Spleen (tissue), 13 donors: ENCODE measurements at regions of chr16 and their contacts with region 1.

Region 1: DNA sequence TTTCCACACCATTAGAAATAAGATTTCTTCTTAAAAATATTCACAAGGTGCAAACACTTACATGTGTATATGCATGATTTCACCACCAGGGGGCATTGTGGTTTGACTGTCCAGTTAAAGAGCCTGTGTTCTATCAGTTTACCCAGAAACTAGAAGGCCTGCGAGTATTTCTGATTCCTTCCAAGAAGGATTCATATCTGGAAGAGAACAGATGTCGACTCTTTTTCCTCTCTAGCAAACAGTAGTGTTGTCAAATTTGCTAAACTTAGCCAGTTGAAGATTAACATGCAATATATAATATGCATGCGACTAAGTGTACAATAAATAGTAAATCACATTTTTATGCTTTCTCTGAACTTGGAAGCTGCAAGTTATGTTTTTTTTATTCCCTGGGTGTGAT is 404.1 kb downstream of the WWOX start:
- DNase-seq: no peak
- H3K4me3 ChIP-seq: no peak overlapping the region
- H3K27ac ChIP-seq: no peak overlapping the region
- H3K4me1 ChIP-seq: peaks cover 0 to 21% (median 2%) of the 10 kb centered on the region in 6 donors
- H3K27me3 ChIP-seq: no peaks in the 10 kb centered on the region
- CTCF ChIP-seq: peak; percentile 54 to 83 (median 73)
- POLR2A ChIP-seq: no peak

Region 2: GRCh38 chr16:78770353-78771091 is 266.9 kb after region 1 on chr16:
- intact Hi-C with region 1: loop called (anchors 5 kb)
- DNase-seq: peak; percentile 95
- H3K4me3 ChIP-seq: peak overlapping the region in 1 of 8 donors; percentile 34
- H3K27ac ChIP-seq: peak overlapping the region in 5 of 8 donors; percentile 28 to 55 (median 49)
- H3K4me1 ChIP-seq: peaks cover 5 to 24% (median 11%) of the 10 kb centered on the region in 6 donors
- H3K27me3 ChIP-seq: no peaks in the 10 kb centered on the region
- CTCF ChIP-seq: peak; percentile 82 to 96 (median 91)
- POLR2A ChIP-seq: no peak

Region 3: DNA sequence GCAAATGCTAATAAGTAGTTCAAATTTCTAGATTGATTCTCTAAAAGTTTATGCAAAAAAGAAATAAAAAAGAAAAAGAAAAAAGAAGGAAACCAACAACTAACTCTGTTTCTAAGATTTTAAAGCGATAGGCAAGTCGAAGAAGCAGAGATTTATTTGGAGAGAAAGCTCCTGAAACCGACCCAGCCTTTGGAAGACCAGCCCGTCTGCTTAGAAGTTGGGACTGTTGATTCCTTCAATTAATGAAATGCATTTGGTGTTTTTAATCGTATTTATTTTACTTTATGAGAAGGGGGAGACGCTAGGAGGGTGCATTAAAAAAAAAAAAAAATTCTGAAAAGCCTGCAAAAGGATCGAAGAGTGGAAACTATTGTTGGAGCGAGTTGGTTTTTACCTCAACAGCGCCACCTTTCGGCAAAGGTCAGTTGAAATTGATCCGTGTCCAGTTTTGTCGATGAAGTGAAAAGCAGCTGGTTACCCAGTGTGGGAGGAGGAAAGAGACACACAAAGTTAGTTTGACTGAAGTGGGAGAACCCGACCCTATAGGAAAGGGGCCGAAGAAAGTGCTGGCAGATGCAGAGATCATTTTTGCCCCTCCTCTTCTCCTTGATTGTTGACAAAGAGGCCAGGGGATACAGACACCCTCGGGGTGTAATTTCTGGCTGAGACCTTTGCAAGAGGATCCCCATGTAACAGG is 1098.5 kb after region 1 on chr16:
- intact Hi-C with region 1: loop called (anchors 5 kb)
- DNase-seq: peak; percentile 83
- H3K4me3 ChIP-seq: peak overlapping the region; percentile 60 to 91 (median 68)
- H3K27ac ChIP-seq: peak overlapping the region; percentile 85 to 94 (median 92)
- H3K4me1 ChIP-seq: peaks cover 12 to 57% (median 26%) of the 10 kb centered on the region in 6 donors
- H3K27me3 ChIP-seq: peaks cover 0 to 62% (median 6%) of the 10 kb centered on the region in 7 donors
- CTCF ChIP-seq: peak; percentile 52 to 81 (median 70)
- POLR2A ChIP-seq: no peak